Endothelial cell of umbilical vein (primary cell): ENCODE measurements at regions of chr12 and their contacts with region 1.

Region 1: DNA sequence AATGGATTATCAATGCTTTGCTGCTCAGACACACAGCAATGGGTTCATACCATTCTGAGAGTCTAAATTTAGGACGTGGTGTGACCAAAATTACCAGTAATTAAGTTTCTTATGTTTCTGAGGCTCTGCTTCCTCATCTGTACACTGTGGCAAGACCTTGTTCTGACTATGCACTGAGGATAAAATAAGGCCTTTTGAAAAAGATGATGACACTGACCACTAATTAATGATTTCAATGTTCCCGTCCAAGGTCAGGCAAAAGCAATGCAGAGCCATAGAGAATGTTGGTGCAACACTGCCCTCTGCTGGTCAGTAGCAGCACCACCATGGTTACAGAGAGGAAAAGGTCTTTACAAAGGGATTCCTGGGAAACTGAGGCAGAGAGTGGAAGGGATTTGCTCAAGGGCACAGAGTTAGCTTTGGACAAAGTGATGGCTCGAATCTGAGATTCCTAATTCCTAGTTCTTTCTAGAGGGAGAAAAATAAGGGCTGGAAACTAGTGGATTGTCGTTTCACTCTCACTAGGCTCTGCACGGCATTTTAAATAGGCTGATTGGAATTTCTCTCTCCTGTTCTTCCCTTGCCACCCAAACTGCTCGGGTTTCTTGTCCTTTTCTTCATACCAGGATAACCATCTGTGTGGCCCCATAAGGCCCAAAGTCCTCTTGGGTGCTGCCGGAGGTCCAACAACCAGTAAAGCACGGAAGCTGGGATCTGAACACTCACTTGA is 22.3 kb upstream of the P2RX7 start:
- DNase-seq: peak; percentile 63
- H3K4me3 ChIP-seq: no peak overlapping the region
- H3K27ac ChIP-seq: no peak overlapping the region
- H3K4me1 ChIP-seq: no peaks in the 10 kb centered on the region
- H3K27me3 ChIP-seq: no peaks in the 10 kb centered on the region
- CTCF ChIP-seq: peak; percentile 80 to 92
- POLR2A ChIP-seq: no peak

Region 2: DNA sequence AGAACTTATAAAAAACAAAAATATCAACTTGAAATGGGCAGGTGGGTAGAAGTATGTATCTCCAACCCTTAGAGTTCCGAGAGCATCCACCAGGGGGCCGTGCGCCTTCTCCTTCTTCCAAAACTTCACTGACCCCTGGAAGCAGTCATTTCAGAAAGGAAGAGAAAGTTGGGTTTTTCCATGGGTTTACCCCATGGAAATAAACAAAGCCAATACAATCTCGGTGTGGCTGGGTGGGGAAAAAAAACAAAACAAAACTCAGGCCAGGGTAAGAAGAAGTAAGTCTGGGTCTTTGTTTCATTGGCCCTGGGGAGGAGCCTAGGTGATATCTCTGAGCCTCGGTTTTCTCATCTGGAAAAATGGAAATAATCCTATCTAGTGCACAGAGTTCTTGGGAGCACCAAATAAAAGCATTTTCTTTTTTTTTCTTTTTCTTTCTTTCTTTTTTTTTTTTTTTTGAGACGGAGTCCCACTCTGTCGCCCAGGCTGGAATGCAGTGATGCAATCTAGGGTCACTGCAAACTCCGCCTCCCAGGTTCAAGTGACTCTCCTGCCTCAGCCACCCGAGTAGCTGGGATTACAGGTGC is 165.6 kb before region 1 on chr12:
- CTCF ChIA-PET with region 1: no interaction called
- POLR2A ChIA-PET with region 1: no interaction called
- dilution Hi-C with region 1: no loop called
- intact Hi-C with region 1: loop called (anchors 2 kb)
- DNase-seq: peak; percentile 54
- H3K4me3 ChIP-seq: no peak overlapping the region
- H3K27ac ChIP-seq: no peak overlapping the region
- H3K4me1 ChIP-seq: no peaks in the 10 kb centered on the region
- H3K27me3 ChIP-seq: no peaks in the 10 kb centered on the region
- CTCF ChIP-seq: peak; percentile 72
- POLR2A ChIP-seq: no peak

Region 3: GRCh38 chr12:121005346-121005815 is 105.0 kb before region 1 on chr12:
- CTCF ChIA-PET with region 1: interaction called, 15 read pairs
- POLR2A ChIA-PET with region 1: no interaction called
- dilution Hi-C with region 1: no loop called
- intact Hi-C with region 1: loop called (anchors 1 kb)
- DNase-seq: peak; percentile 61
- H3K4me3 ChIP-seq: no peak overlapping the region
- H3K27ac ChIP-seq: no peak overlapping the region
- H3K4me1 ChIP-seq: no peaks in the 10 kb centered on the region
- H3K27me3 ChIP-seq: no peaks in the 10 kb centered on the region
- CTCF ChIP-seq: peak; percentile 78 to 89
- POLR2A ChIP-seq: no peak

Region 4: GRCh38 chr12:121095544-121096198 is 14.7 kb before region 1 on chr12:
- CTCF ChIA-PET with region 1: interaction called, 8 read pairs
- POLR2A ChIA-PET with region 1: no interaction called
- dilution Hi-C with region 1: no loop called
- intact Hi-C with region 1: loop called (anchors 1 kb)
- DNase-seq: peak; percentile 83
- H3K4me3 ChIP-seq: peak overlapping the region in 2 of 3 experiments; percentile 6 to 11
- H3K27ac ChIP-seq: peak overlapping the region; percentile 82
- H3K4me1 ChIP-seq: peaks cover 13% of the 10 kb centered on the region
- H3K27me3 ChIP-seq: no peaks in the 10 kb centered on the region
- CTCF ChIP-seq: peak; percentile 76 to 97
- POLR2A ChIP-seq: no peak

Region 5: GRCh38 chr12:121209624-121210572 is 99.5 kb after region 1 on chr12 and contains the start of gene P2RX4:
- CTCF ChIA-PET with region 1: interaction called, 3 read pairs
- POLR2A ChIA-PET with region 1: no interaction called
- dilution Hi-C with region 1: no loop called
- intact Hi-C with region 1: loop called (anchors 1 kb)
- DNase-seq: peak; percentile 76
- H3K4me3 ChIP-seq: peak within 1 kb of the TSS; percentile 35 to 75 (median 52)
- H3K27ac ChIP-seq: peak within 1 kb of the TSS; percentile 59
- H3K4me1 ChIP-seq: peaks cover 23% of the 10 kb centered on the region
- H3K27me3 ChIP-seq: no peaks in the 10 kb centered on the region
- CTCF ChIP-seq: peak; percentile 16 to 23
- POLR2A ChIP-seq: peak; percentile 78
- total RNA-seq, gene P2RX4: 72.8 and 116 TPM in 2 replicates

Region 6: DNA sequence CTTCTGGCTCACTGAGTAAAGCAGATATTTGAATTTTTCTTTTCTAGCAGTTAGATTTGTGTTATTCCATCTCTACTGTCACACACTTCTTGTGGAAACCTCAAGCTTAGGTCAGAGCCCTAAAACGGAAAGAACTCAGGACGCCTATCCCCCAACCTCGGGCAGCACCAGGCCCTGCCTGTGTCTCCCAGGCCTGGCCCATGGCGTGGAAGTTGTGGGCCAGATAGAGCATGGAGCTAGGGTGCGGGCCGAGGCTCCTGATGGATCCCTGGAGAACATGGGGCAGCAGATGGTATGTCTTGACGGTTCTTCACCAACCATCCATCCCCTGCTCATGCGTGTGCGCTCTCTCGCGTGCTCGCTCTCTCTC is 120.1 kb after region 1 on chr12:
- CTCF ChIA-PET with region 1: no interaction called
- POLR2A ChIA-PET with region 1: no interaction called
- dilution Hi-C with region 1: no loop called
- intact Hi-C with region 1: loop called (anchors 1 kb)
- DNase-seq: no peak
- H3K4me3 ChIP-seq: no peak overlapping the region
- H3K27ac ChIP-seq: no peak overlapping the region
- H3K4me1 ChIP-seq: no peaks in the 10 kb centered on the region
- H3K27me3 ChIP-seq: no peaks in the 10 kb centered on the region
- CTCF ChIP-seq: no peak
- POLR2A ChIP-seq: no peak